MCF 10A (cell line): ENCODE measurements at regions of chr16 and their contacts with region 1.

Region 1: DNA sequence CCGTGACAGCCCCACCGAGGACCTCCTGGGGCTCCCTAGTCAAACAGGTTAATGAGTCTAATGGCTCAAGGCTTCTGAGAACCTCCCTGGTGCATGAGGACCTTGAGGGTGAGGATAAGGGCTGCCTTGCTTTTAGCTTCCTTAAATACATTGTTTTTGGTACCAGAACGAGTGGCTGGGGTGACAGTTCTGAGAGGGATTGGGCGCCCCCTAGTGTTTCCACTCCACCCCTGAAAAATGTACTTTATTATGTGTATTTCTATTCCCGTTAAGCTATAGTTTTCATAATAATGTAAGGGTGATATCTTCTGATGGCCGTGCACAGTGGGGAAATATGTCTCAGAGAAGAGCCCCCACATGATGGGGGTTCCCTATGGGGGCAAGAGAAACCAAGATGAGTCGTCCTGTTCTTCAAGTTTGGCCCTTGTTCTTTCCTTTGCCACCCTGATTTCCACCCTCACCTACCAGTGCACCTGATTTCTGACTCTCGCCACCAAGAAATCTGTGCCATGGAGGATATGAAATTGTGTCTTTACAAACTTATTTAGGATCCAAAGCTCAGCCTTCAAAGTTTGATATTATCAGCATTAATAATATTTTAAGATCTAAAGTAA is 14.5 kb upstream of the VWA3A start:
- DNase-seq: peak; percentile 69
- H3K4me3 Mint-ChIP-seq: no peak overlapping the region
- H3K27ac Mint-ChIP-seq: no peak overlapping the region
- H3K4me1 Mint-ChIP-seq: no peaks in the 10 kb centered on the region
- H3K27me3 Mint-ChIP-seq: no peaks in the 10 kb centered on the region
- CTCF ChIP-seq: peak; percentile 81

Region 2: DNA sequence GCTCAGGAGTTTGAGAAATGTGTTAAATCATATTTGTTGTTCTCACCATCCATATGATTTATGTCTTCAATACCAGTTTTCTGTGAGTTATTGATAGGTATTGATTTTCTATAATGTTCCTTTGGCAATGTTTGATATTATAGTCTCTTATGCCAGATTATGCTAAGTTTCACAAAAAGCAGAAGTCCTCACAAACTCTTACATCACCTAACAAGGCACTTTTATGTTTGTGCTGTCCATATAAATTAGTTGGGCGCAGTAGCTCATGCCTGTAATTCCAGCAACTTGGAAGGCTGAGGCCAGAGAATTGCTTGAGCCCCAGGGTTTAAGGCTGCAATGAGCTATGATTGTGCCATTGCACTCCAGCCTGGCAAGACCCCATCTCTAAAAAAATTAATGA is 137.2 kb before region 1 on chr16:
- CTCF ChIA-PET with region 1: no interaction called
- POLR2A ChIA-PET with region 1: no interaction called
- intact Hi-C with region 1: no loop called
- DNase-seq: no peak
- H3K4me3 Mint-ChIP-seq: no peak overlapping the region
- H3K27ac Mint-ChIP-seq: no peak overlapping the region
- H3K4me1 Mint-ChIP-seq: no peaks in the 10 kb centered on the region
- H3K27me3 Mint-ChIP-seq: peaks cover 30% of the 10 kb centered on the region
- CTCF ChIP-seq: no peak

Region 3: DNA sequence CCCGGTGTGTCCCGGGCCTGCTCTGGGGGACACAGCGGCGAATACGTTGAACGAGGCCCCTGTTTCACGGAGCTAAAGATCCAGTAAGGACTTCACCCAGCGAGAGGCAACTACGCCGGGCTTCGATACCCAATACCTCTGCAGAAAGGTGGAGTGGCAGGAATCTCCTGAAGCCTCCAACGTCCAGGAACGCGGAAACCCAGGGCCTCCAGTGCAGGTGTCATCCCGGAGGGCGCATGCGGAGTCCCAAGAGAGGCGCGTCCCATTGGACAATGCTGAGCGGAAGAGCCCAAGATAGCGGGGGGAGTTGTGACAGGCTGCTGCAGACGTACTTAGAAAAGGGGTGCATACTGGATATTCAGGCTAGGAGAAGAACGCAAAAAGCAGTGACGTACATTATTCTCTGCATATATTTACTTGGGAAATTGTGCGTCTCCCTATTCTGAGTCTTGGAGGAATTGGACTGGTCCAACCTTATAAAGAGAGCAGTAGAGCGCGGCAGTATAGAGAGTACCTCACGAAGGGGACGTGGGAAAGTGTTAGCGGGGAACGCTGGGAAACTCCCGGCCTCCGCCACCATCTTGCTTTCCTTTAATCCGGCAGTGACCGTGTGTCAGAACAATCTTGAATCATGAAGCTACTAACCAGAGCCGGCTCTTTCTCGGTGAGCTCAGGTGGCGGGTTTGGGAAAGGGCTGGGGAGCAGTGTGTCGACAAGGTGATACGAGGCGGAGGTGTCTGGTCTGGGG is 124.8 kb before region 1 on chr16 and contains the start of gene UQCRC2:
- CTCF ChIA-PET with region 1: interaction called, 10 read pairs
- POLR2A ChIA-PET with region 1: interaction called, 4 read pairs
- intact Hi-C with region 1: no loop called
- DNase-seq: peak; percentile 95
- H3K4me3 Mint-ChIP-seq: peak within 1 kb of the TSS; percentile 99
- H3K27ac Mint-ChIP-seq: peak within 1 kb of the TSS; percentile 99
- H3K4me1 Mint-ChIP-seq: peaks cover 7% of the 10 kb centered on the region
- H3K27me3 Mint-ChIP-seq: no peaks in the 10 kb centered on the region
- CTCF ChIP-seq: no peak
- total RNA-seq, gene UQCRC2: 199 and 207 TPM in 2 replicates

Region 4: DNA sequence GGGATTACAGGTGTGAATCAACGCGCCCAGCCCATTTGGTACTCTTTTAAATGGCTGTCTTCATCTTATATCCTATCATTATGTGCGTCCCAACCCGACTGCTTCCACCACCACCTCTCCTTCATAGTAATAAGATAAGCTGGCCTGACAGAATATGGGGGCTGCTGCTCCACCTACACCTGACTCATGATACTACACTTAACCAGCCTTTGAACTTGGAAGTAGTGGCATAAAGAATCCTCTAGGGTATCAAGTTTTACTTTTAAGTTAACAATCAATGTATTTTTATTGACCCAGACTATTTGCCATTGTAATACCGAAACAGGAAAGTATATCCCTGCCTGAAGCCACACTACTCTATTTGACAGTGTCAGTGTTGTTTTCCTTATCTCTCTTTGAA is 95.7 kb before region 1 on chr16:
- CTCF ChIA-PET with region 1: interaction called, 25 read pairs
- POLR2A ChIA-PET with region 1: interaction called, 7 read pairs
- intact Hi-C with region 1: no loop called
- DNase-seq: no peak
- H3K4me3 Mint-ChIP-seq: no peak overlapping the region
- H3K27ac Mint-ChIP-seq: peak overlapping the region; percentile 52
- H3K4me1 Mint-ChIP-seq: no peaks in the 10 kb centered on the region
- H3K27me3 Mint-ChIP-seq: no peaks in the 10 kb centered on the region
- CTCF ChIP-seq: no peak

Region 5: GRCh38 chr16:22001591-22001990 is 76.2 kb before region 1 on chr16:
- CTCF ChIA-PET with region 1: interaction called, 502 read pairs
- POLR2A ChIA-PET with region 1: interaction called, 78 read pairs
- intact Hi-C with region 1: loop called (anchors 1 kb)
- DNase-seq: no peak
- H3K4me3 Mint-ChIP-seq: peak overlapping the region; percentile 56
- H3K27ac Mint-ChIP-seq: no peak overlapping the region
- H3K4me1 Mint-ChIP-seq: peaks cover 22% of the 10 kb centered on the region
- H3K27me3 Mint-ChIP-seq: no peaks in the 10 kb centered on the region
- CTCF ChIP-seq: no peak

Region 6: GRCh38 chr16:22013486-22013885 is 64.3 kb before region 1 on chr16:
- CTCF ChIA-PET with region 1: interaction called, 502 read pairs
- POLR2A ChIA-PET with region 1: interaction called, 78 read pairs
- intact Hi-C with region 1: no loop called
- DNase-seq: no peak
- H3K4me3 Mint-ChIP-seq: no peak overlapping the region
- H3K27ac Mint-ChIP-seq: no peak overlapping the region
- H3K4me1 Mint-ChIP-seq: peaks cover 25% of the 10 kb centered on the region
- H3K27me3 Mint-ChIP-seq: no peaks in the 10 kb centered on the region
- CTCF ChIP-seq: no peak

Region 7: GRCh38 chr16:22055878-22056277 is 21.9 kb before region 1 on chr16:
- CTCF ChIA-PET with region 1: interaction called, 11 read pairs
- POLR2A ChIA-PET with region 1: interaction called, 6 read pairs
- intact Hi-C with region 1: no loop called
- DNase-seq: no peak
- H3K4me3 Mint-ChIP-seq: no peak overlapping the region
- H3K27ac Mint-ChIP-seq: no peak overlapping the region
- H3K4me1 Mint-ChIP-seq: no peaks in the 10 kb centered on the region
- H3K27me3 Mint-ChIP-seq: no peaks in the 10 kb centered on the region
- CTCF ChIP-seq: no peak

Region 8: GRCh38 chr16:22091758-22092600 is 14.2 kb after region 1 on chr16 and contains the start of gene VWA3A:
- CTCF ChIA-PET with region 1: interaction called, 47 read pairs
- POLR2A ChIA-PET with region 1: interaction called, 4 read pairs
- intact Hi-C with region 1: no loop called
- DNase-seq: peak; percentile 13
- H3K4me3 Mint-ChIP-seq: no peak within 1 kb of the TSS
- H3K27ac Mint-ChIP-seq: no peak within 1 kb of the TSS
- H3K4me1 Mint-ChIP-seq: no peaks in the 10 kb centered on the region
- H3K27me3 Mint-ChIP-seq: peaks cover 2% of the 10 kb centered on the region
- CTCF ChIP-seq: no peak
- total RNA-seq, gene VWA3A: 0.12 TPM in 1 of 2 replicates, not detected in the other